T-cell (primary cell): ENCODE measurements at regions of chr4 and their contacts with region 1.

Region 1: GRCh38 chr4:67087897-67088296 is 457.4 kb downstream of the CENPC start:
- DNase-seq: peak in 14 of 35 experiments; percentile 0 to 37 (median 4)
- ATAC-seq: no peak
- H3K4me3 ChIP-seq: no peak overlapping the region
- H3K4me3 Mint-ChIP-seq: no peak overlapping the region
- H3K27ac ChIP-seq: no peak overlapping the region
- H3K27ac Mint-ChIP-seq: no peak overlapping the region
- H3K4me1 ChIP-seq: no peaks in the 10 kb centered on the region
- H3K4me1 Mint-ChIP-seq: no peaks in the 10 kb centered on the region
- H3K27me3 ChIP-seq: no peaks in the 10 kb centered on the region
- H3K27me3 Mint-ChIP-seq: no peaks in the 10 kb centered on the region

Region 2: GRCh38 chr4:67327262-67328017 is 239.5 kb after region 1 on chr4:
- CTCF ChIA-PET with region 1: interaction called in 1 of 2 experiments, 10 read pairs
- POLR2A ChIA-PET with region 1: no interaction called
- DNase-seq: peak in 30 of 35 experiments; percentile 2 to 65 (median 18)
- ATAC-seq: peak in 2 of 4 experiments; percentile 59 to 67
- H3K4me3 ChIP-seq: no peak overlapping the region
- H3K4me3 Mint-ChIP-seq: no peak overlapping the region
- H3K27ac ChIP-seq: no peak overlapping the region
- H3K27ac Mint-ChIP-seq: no peak overlapping the region
- H3K4me1 ChIP-seq: no peaks in the 10 kb centered on the region
- H3K4me1 Mint-ChIP-seq: peaks cover 0 to 4% (median 1%) of the 10 kb centered on the region in 3 donors
- H3K27me3 ChIP-seq: no peaks in the 10 kb centered on the region
- H3K27me3 Mint-ChIP-seq: peaks cover 19 to 21% of the 10 kb centered on the region in 2 donors